Activated CD4-positive, alpha-beta T cell treated with anti-CD3 and anti-CD28 coated beads for 36 hours (primary cell): ENCODE measurements at regions of chr16 and their contacts with region 1.

Region 1: DNA sequence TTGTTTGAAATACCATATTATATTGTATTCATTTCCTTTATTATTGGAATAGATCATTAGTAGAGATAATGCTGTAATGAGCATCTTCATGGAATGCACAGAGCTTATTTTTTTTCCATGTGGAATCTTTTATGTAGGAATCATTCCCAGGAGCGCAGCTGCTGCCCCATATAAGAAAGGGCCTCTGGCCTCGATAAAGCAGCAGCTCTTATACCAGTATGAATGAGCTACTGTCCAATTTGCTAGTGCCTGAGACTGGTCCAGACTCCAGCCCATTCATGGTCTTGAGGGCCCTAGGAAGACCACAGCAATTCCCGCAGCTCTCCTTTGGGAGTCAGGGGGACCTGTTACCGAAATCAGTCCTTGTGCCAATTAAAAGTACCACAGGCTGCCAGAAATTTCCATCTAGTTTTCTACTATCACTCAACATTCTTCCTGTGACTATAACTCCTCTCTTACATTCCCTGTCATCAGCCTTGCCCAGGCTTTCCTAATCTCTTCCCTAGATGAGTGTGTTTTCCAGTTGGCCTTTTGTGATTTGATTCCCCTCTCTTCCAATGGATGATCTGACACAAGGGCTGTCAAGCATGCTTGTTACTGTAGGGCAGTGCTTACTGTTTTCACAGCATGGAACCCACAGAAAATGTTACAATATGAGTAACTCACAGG is 1.9 kb downstream of the ZNF843 start:
- DNase-seq: no peak
- ATAC-seq: no peak
- H3K4me3 Mint-ChIP-seq: no peak overlapping the region
- H3K27ac Mint-ChIP-seq: no peak overlapping the region
- H3K4me1 Mint-ChIP-seq: peaks cover 18% of the 10 kb centered on the region
- H3K27me3 Mint-ChIP-seq: peaks cover 2% of the 10 kb centered on the region

Region 2: DNA sequence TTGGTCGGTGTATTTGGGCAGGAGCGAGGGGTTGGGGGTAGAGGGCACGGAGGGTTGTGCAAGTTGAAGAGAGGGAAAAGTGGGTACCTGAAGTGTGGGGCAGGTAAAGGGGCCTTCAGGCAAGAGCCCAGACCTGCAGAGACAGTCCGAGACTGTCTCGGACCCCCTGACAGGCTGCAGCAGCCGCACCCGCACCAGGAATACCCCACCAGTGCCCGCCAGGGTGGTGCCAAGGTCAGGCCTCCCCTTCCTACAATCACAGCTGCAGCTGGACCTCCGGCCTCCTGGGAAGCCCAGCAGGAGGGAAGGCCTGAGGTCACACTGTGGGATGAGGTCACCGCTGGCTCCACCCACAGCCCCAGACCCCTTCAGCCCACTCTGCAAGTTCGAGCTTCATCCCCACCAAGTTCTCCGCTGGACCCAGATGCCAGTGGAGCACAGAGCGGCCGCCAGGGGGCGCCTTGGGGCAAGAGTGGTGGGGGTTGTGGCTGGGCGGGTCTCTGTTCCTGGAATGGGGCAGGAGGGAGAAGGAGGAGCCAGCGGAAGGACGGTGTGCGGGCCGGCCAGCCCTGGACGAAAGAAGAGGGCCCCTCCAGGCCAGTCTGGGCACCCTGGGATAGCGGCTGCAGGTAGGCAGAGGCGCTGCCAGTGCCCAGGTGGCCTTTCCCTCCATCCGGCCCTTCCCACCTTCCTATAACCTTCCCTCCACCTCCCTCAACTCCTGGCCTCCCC is 455.8 kb before region 1 on chr16 and contains the start of gene HSD3B7:
- CTCF ChIA-PET with region 1: interaction called, 3 read pairs
- POLR2A ChIA-PET with region 1: interaction called, 3 read pairs
- intact Hi-C with region 1: loop called (anchors 1 kb)
- DNase-seq: peak; percentile 91
- ATAC-seq: peak; percentile 92
- H3K4me3 Mint-ChIP-seq: no peak within 1 kb of the TSS
- H3K27ac Mint-ChIP-seq: peak within 1 kb of the TSS; percentile 31
- H3K4me1 Mint-ChIP-seq: peaks cover 3% of the 10 kb centered on the region
- H3K27me3 Mint-ChIP-seq: no peaks in the 10 kb centered on the region
- total RNA-seq, gene HSD3B7: 1.6 to 2.2 TPM

Region 3: GRCh38 chr16:31067342-31067741 is 373.3 kb before region 1 on chr16:
- CTCF ChIA-PET with region 1: no interaction called
- POLR2A ChIA-PET with region 1: no interaction called
- intact Hi-C with region 1: no loop called
- DNase-seq: no peak
- ATAC-seq: no peak
- H3K4me3 Mint-ChIP-seq: no peak overlapping the region
- H3K27ac Mint-ChIP-seq: no peak overlapping the region
- H3K4me1 Mint-ChIP-seq: peaks cover 49% of the 10 kb centered on the region
- H3K27me3 Mint-ChIP-seq: no peaks in the 10 kb centered on the region

Region 4: DNA sequence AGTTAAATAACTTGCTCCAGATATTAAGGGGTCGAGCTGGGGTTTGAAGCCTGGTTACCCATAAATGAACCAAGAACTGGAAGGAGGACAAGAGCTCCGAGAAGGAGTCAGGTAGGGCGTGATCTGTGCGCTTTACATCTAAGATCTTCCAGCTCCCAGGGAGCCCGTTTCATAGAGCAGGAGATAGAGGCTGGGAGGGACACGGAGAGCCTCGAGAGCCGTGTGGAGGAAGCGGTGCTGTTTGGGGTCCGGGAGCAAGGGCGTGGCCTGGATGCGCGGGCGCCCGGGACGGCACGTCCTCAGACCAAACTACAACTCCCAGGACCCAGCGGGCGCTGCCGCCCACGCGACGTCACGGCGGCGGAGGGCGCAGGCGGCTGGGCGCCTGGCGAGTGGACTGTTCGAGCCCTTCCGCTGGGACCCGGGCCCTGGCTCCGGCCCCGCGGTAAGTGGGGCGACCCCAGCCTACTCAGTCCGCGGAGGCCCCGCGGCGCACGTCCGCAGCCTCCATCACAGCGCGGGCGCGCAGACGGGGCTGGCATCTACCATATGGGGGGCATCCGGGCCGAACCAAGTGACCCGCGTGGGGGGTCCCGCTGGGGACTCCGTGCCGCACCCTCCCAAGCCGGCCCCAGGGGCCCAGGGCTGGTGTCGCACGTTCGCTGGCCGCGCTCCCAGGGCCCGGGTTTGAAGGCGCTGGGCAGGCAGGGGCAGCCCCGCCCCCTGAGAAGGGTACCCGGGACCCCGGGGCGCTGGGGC is 332.4 kb before region 1 on chr16 and contains the start of gene BCKDK:
- CTCF ChIA-PET with region 1: no interaction called
- POLR2A ChIA-PET with region 1: no interaction called
- intact Hi-C with region 1: loop called in 1 of 2 experiments (anchors 5 kb)
- DNase-seq: peak; percentile 90
- ATAC-seq: peak; percentile 79
- H3K4me3 Mint-ChIP-seq: peak within 1 kb of the TSS; percentile 86
- H3K27ac Mint-ChIP-seq: peak within 1 kb of the TSS; percentile 96
- H3K4me1 Mint-ChIP-seq: peaks cover 22% of the 10 kb centered on the region
- H3K27me3 Mint-ChIP-seq: no peaks in the 10 kb centered on the region
- total RNA-seq, gene BCKDK: 50.0 to 53.3 TPM

Region 5: GRCh38 chr16:31196324-31197088 is 244.1 kb before region 1 on chr16:
- CTCF ChIA-PET with region 1: interaction called, 4 read pairs
- POLR2A ChIA-PET with region 1: interaction called, 12 read pairs
- intact Hi-C with region 1: loop called (anchors 5 kb)
- DNase-seq: no peak
- ATAC-seq: no peak
- H3K4me3 Mint-ChIP-seq: no peak overlapping the region
- H3K27ac Mint-ChIP-seq: no peak overlapping the region
- H3K4me1 Mint-ChIP-seq: peaks cover 61% of the 10 kb centered on the region
- H3K27me3 Mint-ChIP-seq: no peaks in the 10 kb centered on the region

Region 6: GRCh38 chr16:31202414-31203375 is 238.0 kb before region 1 on chr16 and contains the start of gene PYCARD:
- CTCF ChIA-PET with region 1: interaction called, 4 read pairs
- POLR2A ChIA-PET with region 1: no interaction called
- intact Hi-C with region 1: loop called (anchors 5 kb)
- DNase-seq: peak; percentile 53
- ATAC-seq: peak; percentile 7
- H3K4me3 Mint-ChIP-seq: peak within 1 kb of the TSS; percentile 71
- H3K27ac Mint-ChIP-seq: peak within 1 kb of the TSS; percentile 52
- H3K4me1 Mint-ChIP-seq: peaks cover 47% of the 10 kb centered on the region
- H3K27me3 Mint-ChIP-seq: peaks cover 3% of the 10 kb centered on the region
- total RNA-seq, gene PYCARD: 5.7 TPM